ENCODE measurements at regions of chr11 and their contacts with region 1.

Region 1: DNA sequence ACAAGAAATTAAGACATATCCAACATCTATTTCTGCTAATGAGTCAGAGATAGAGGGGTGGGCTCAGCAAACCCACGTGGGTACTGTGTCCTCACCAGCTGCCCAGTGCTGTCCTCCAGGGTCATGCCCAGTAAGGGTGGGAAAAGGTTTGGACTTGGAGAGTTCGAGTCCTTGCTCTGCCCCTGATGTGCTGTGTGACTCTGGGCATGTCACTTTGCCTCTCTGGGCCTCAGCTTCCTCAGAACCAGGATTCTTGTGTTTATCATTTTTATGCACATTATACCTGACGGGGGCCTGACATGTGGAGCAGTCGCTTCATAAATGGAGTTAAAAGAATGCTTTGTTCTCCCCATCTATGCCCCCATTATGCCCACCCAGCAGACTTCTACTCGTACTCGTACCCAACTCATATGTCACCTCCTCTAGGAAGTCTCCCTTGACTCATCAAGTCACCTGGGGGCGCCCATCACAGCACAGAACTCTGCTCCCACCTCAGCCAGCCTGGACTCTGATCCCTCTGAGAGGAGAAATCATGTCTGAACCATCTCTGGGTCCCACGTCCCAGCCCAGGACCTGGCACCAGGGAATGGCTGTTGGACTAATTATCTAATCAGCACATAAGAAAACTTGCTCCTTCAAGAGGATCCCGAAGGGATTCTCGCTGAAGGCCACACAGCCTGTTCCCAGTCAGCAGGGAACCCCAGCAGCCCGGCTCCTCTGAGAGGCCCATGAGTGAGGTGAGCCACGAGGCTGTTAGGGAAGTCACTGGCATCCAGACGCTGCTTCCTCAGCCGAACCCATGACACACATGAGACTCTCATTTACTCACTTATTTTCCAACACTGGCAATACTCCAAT is 38.7 kb upstream of the TSKU start:
- DNase-seq: no peak
- ATAC-seq: no peak
- H3K4me3 ChIP-seq: no peak overlapping the region
- H3K27ac ChIP-seq: no peak overlapping the region
- H3K4me1 ChIP-seq: peaks cover 0 to 6% of the 10 kb centered on the region in 2 experiments; a peak in 2 of 4 replicates
- H3K27me3 ChIP-seq: no peaks in the 10 kb centered on the region
- CTCF ChIP-seq: no peak
- POLR2A ChIP-seq: no peak
- RAD21 ChIP-seq: no peak

Region 2: GRCh38 chr11:76025068-76025467 is 719.3 kb before region 1 on chr11:
- CTCF ChIA-PET with region 1: no interaction called
- POLR2A ChIA-PET with region 1: no interaction called
- RAD21 ChIA-PET with region 1: no interaction called
- intact Hi-C with region 1: no loop called
- DNase-seq: no peak
- ATAC-seq: no peak
- H3K4me3 ChIP-seq: no peak overlapping the region
- H3K27ac ChIP-seq: no peak overlapping the region
- H3K4me1 ChIP-seq: no peaks in the 10 kb centered on the region
- H3K27me3 ChIP-seq: no peaks in the 10 kb centered on the region
- CTCF ChIP-seq: no peak
- POLR2A ChIP-seq: no peak
- RAD21 ChIP-seq: no peak

Region 3: GRCh38 chr11:76782526-76783293 is 38.3 kb after region 1 on chr11:
- CTCF ChIA-PET with region 1: no interaction called
- POLR2A ChIA-PET with region 1: no interaction called
- RAD21 ChIA-PET with region 1: no interaction called
- intact Hi-C with region 1: loop called (anchors 5 kb)
- DNase-seq: peak; percentile 79
- ATAC-seq: peak; percentile 84
- H3K4me3 ChIP-seq: peak overlapping the region; percentile 58 to 91
- H3K27ac ChIP-seq: peak overlapping the region; percentile 88
- H3K4me1 ChIP-seq: peaks cover 38 to 52% of the 10 kb centered on the region in 2 experiments
- H3K27me3 ChIP-seq: no peaks in the 10 kb centered on the region
- CTCF ChIP-seq: no peak
- POLR2A ChIP-seq: peak; percentile 60
- RAD21 ChIP-seq: no peak